ENCODE measurements at regions of chr10 and their contacts with region 1.

Region 1: GRCh38 chr10:73848821-73849489 is 25.4 kb downstream of the CAMK2G start:
- DNase-seq: peak; percentile 100
- ATAC-seq: peak; percentile 96
- H3K4me3 ChIP-seq: no peak overlapping the region
- H3K27ac ChIP-seq: no peak overlapping the region
- H3K4me1 ChIP-seq: no peaks in the 10 kb centered on the region
- H3K27me3 ChIP-seq: no peaks in the 10 kb centered on the region
- CTCF ChIP-seq: peak; percentile 100

Region 2: GRCh38 chr10:73809061-73809818 is 39.7 kb before region 1 on chr10:
- CTCF ChIA-PET with region 1: no interaction called
- POLR2A ChIA-PET with region 1: no interaction called
- intact Hi-C with region 1: no loop called
- DNase-seq: no peak
- ATAC-seq: no peak
- H3K4me3 ChIP-seq: no peak overlapping the region
- H3K27ac ChIP-seq: no peak overlapping the region
- H3K4me1 ChIP-seq: peaks cover 4% of the 10 kb centered on the region
- H3K27me3 ChIP-seq: no peaks in the 10 kb centered on the region
- CTCF ChIP-seq: no peak

Region 3: DNA sequence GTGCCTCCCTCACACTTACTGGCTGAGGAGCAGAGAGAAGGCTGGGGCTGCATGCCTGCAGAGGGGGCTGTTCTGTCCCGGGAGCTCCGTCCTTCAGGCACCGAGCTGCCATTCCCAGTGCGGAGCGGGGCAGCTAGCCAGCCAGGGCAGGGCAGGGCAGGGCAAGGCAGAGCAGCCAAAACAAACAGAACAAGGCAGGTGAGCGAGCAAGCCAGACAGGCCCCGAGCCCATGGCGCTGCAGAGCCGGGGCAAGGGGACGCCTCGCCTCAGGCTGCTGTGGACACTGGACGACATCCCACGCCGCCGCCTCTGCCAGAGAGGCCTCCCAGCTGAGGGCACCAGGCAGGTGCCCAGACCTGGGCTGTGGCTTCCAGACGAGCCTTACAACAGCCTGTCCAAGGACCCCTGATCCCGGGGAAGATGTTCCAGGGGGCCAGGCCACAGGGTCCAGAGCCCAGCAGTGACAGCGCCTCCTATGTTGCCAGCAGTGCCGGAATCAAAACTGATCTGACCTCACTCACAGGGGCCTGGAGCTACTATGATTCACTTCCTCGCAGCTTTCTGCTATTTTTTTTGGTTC is 29.4 kb before region 1 on chr10:
- CTCF ChIA-PET with region 1: interaction called, 15 read pairs
- POLR2A ChIA-PET with region 1: interaction called, 4 read pairs
- intact Hi-C with region 1: loop called (anchors 2 kb)
- DNase-seq: peak; percentile 97
- ATAC-seq: peak; percentile 94
- H3K4me3 ChIP-seq: peak overlapping the region; percentile 33
- H3K27ac ChIP-seq: peak overlapping the region; percentile 66
- H3K4me1 ChIP-seq: peaks cover 22% of the 10 kb centered on the region
- H3K27me3 ChIP-seq: no peaks in the 10 kb centered on the region
- CTCF ChIP-seq: peak; percentile 89

Region 4: DNA sequence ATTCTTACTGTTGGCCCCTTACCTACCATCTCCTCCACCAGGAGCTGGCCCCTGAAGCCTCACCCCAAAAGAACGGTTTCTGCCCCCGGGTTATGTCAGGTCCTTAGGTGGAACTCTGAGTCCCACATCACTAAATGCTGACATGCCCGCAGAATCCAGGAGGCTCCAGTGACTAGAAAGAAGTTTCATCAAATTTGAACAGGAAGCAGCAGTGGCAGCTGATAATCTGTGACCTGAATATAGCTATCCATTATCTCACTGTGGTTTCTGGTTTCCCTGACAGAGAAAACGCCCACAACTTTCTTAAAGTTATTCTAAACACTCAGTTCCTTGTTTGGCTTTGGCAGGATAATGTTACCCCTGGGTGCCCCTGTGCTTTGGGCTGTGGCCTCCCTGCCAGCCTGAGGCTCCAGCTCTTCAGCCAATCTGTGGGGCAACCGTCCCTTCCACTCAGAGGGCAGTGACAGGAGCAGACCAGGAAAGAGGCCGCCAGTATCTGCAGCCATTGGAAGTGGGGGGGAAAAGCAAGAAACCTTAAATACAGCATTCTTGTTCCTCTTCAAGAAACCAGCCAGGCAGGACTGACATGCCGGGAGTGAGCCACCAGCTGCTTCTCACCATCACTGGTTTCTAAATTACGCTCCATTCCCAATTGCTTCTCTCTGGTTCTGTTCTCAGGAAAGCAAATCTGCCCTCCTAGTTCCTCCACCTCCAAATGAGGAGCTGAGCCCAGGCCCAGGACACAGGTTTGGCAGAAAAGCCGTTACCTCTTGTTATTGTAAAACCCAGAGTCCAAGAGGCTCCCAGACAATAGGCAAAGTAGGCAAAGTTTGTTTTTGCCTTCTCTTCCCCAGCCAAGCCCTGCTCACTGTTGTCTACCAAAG is 107.8 kb after region 1 on chr10:
- CTCF ChIA-PET with region 1: no interaction called
- POLR2A ChIA-PET with region 1: no interaction called
- intact Hi-C with region 1: loop called (anchors 5 kb)
- DNase-seq: peak; percentile 67
- ATAC-seq: peak; percentile 39
- H3K4me3 ChIP-seq: no peak overlapping the region
- H3K27ac ChIP-seq: no peak overlapping the region
- H3K4me1 ChIP-seq: peaks cover 11% of the 10 kb centered on the region
- H3K27me3 ChIP-seq: no peaks in the 10 kb centered on the region
- CTCF ChIP-seq: no peak

Measured in PC-3 (cell line).